Calu3 (cell line): ENCODE measurements at regions of chr20 and their contacts with region 1.

Region 1: GRCh38 chr20:50214226-50215024 is 23.8 kb downstream of the CEBPB start:
- DNase-seq: no peak
- H3K4me3 Mint-ChIP-seq: no peak overlapping the region
- H3K27ac Mint-ChIP-seq: no peak overlapping the region
- H3K4me1 Mint-ChIP-seq: peaks cover 67% of the 10 kb centered on the region
- H3K27me3 Mint-ChIP-seq: no peaks in the 10 kb centered on the region
- CTCF ChIP-seq: no peak

Region 2: GRCh38 chr20:49657118-49657901 is 557.1 kb before region 1 on chr20:
- CTCF ChIA-PET with region 1: no interaction called
- intact Hi-C with region 1: no loop called
- DNase-seq: no peak
- H3K4me3 Mint-ChIP-seq: no peak overlapping the region
- H3K27ac Mint-ChIP-seq: no peak overlapping the region
- H3K4me1 Mint-ChIP-seq: peaks cover 8% of the 10 kb centered on the region
- H3K27me3 Mint-ChIP-seq: no peaks in the 10 kb centered on the region
- CTCF ChIP-seq: no peak

Region 3: GRCh38 chr20:50181364-50181763 is 33.1 kb before region 1 on chr20:
- CTCF ChIA-PET with region 1: no interaction called
- intact Hi-C with region 1: no loop called
- DNase-seq: no peak
- H3K4me3 Mint-ChIP-seq: no peak overlapping the region
- H3K27ac Mint-ChIP-seq: no peak overlapping the region
- H3K4me1 Mint-ChIP-seq: peaks cover 20% of the 10 kb centered on the region
- H3K27me3 Mint-ChIP-seq: no peaks in the 10 kb centered on the region
- CTCF ChIP-seq: no peak

Region 4: DNA sequence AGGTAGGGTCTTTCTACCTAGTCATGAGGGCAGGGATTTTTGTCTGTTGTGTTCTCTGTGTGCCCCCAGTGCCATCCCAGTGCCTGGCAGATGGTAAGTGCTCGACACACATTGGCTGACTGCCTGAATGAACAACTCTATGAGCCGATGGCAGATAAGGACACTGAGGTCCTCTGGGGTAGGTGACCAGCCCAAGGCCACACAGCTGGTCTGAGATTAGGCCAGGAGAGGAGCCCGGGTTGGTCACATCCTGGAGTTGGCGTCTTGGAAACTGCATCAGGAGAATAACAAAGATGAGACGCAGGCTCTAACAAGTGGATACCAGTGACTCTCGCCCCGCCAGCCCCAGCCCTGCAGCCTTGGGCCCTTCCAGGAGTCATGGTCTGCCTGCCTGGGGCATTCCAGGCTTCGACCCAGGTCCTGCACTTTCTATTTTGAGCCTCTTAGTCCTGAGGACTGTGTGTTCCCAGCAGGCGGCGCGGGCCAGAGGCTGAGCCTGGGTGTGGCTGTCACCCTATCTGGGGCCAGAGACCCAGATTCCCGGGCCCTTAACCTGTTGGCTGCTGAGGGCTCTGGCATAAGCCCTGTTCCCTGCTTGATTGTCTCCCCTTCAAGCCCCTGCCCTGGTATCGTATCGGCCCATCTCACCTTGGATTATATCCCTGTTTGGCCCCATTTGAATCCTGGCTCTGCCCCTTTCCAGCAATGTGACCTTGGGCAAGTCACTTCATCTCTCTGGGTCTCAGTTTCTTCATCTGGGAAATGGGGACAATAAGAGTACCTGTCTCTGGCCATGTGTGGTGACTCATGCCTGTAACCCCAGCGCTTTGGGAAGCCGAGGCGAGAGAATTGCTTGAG is 64.5 kb after region 1 on chr20:
- CTCF ChIA-PET with region 1: no interaction called
- intact Hi-C with region 1: no loop called
- DNase-seq: peak; percentile 88
- H3K4me3 Mint-ChIP-seq: no peak overlapping the region
- H3K27ac Mint-ChIP-seq: peak overlapping the region; percentile 12
- H3K4me1 Mint-ChIP-seq: peaks cover 43% of the 10 kb centered on the region
- H3K27me3 Mint-ChIP-seq: no peaks in the 10 kb centered on the region
- CTCF ChIP-seq: peak; percentile 77

Region 5: GRCh38 chr20:50328222-50328959 is 114.0 kb after region 1 on chr20:
- CTCF ChIA-PET with region 1: interaction called, 10 read pairs
- intact Hi-C with region 1: no loop called
- DNase-seq: no peak
- H3K4me3 Mint-ChIP-seq: no peak overlapping the region
- H3K27ac Mint-ChIP-seq: no peak overlapping the region
- H3K4me1 Mint-ChIP-seq: peaks cover 45% of the 10 kb centered on the region
- H3K27me3 Mint-ChIP-seq: peaks cover 17% of the 10 kb centered on the region
- CTCF ChIP-seq: no peak

Region 6: DNA sequence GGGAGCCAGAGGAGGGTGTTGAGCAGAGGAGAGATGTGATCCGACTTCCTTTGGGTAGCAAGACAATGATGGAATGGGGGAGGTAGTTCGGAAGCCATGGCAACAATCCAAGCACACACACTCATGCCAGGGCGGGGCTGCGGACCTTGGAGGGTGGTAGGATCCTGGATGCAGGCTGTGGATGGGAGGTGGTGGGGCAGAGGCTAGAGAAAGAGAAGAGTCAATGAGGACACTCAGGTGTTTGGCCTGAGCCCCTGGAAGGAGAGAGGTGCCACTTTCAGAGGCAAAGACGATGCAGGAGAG is 159.5 kb after region 1 on chr20:
- CTCF ChIA-PET with region 1: no interaction called
- intact Hi-C with region 1: no loop called
- DNase-seq: peak; percentile 75
- H3K4me3 Mint-ChIP-seq: no peak overlapping the region
- H3K27ac Mint-ChIP-seq: peak overlapping the region; percentile 56
- H3K4me1 Mint-ChIP-seq: peaks cover 70% of the 10 kb centered on the region
- H3K27me3 Mint-ChIP-seq: no peaks in the 10 kb centered on the region
- CTCF ChIP-seq: no peak